ENCODE measurements at regions of chr10 and their contacts with region 1.

Region 1: DNA sequence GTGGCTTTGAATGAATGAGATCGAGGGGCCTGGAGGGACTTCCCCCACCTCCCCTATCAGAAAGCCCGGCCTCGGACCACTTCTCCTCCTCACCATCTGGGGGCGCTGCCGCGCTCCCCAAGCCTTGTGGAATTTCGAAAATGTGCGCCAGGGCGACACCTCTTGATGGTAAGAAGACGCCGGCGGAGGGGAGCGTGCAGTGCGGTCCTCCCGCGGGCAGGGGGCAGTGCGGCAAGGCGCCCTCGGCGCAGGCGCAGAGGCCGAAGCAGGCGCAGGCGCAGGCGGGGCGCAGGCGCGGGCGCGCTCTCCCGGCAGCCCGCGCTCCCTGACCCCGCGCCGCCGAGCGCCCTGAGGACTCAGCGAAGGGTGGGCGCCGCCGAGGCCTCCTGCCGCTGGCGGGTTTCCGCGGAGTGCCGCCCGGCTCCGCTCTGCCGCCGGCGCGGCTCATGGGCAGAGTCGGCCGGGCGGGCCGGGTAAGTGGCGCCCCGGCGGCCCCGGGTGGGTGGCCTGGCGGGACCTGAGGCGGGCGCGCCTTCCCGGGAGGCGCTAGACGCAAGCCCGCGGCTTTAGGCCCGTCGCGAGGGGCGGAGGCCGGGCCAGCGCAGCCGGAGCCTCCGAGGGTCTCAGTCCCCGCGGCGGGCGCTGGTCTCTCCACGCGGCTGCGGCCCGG is at the start of gene RBM17:
- DNase-seq: peak; percentile 96
- H3K4me3 ChIP-seq: peak within 1 kb of the TSS; percentile 86 to 97
- H3K27ac ChIP-seq: peak within 1 kb of the TSS; percentile 52 to 80
- H3K4me1 ChIP-seq: peaks cover 7% of the 10 kb centered on the region
- H3K27me3 ChIP-seq: no peaks in the 10 kb centered on the region
- CTCF ChIP-seq: peak; percentile 100
- POLR2A ChIP-seq: peak; percentile 46
- total RNA-seq, gene RBM17: 40.5 to 59.2 TPM

Region 2: GRCh38 chr10:5948999-5949759 is 139.7 kb before region 1 on chr10:
- intact Hi-C with region 1: loop called (anchors 5 kb)
- DNase-seq: no peak
- H3K4me3 ChIP-seq: no peak overlapping the region
- H3K27ac ChIP-seq: no peak overlapping the region
- H3K4me1 ChIP-seq: no peaks in the 10 kb centered on the region
- H3K27me3 ChIP-seq: no peaks in the 10 kb centered on the region
- CTCF ChIP-seq: peak in 3 of 4 experiments; percentile 11 to 46 (median 32)
- POLR2A ChIP-seq: no peak

Region 3: DNA sequence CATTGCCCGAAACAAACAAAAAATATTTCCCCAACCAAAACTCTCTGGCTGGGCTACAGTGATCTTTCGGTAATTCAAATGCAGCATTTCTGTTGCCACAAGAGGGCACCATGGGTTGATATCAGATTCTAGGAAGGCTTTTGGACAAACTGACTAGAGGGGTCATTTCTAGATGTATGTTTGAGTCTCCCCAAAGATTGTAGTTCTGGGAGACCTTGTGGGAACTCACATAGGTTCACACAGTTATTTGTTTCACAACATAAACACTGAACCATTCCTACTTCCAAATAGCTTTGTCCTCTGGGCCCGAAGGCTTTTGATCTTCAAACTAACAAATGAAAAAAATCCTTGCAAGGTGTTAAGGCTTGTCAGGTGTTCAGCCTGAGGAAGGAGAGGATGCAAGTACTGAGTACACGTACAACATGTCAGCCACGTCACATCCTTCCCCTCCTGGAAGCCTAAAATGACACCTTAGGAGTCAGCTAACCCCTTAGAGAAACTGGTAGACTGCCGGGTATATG is 74.6 kb before region 1 on chr10:
- intact Hi-C with region 1: loop called (anchors 10 kb)
- DNase-seq: peak; percentile 26
- H3K4me3 ChIP-seq: no peak overlapping the region
- H3K27ac ChIP-seq: no peak overlapping the region
- H3K4me1 ChIP-seq: no peaks in the 10 kb centered on the region
- H3K27me3 ChIP-seq: no peaks in the 10 kb centered on the region
- CTCF ChIP-seq: peak; percentile 38 to 67 (median 60)
- POLR2A ChIP-seq: no peak

Region 4: GRCh38 chr10:6141296-6142151 is 52.7 kb after region 1 on chr10:
- intact Hi-C with region 1: no loop called
- DNase-seq: peak; percentile 42
- H3K4me3 ChIP-seq: peak overlapping the region; percentile 7 to 16
- H3K27ac ChIP-seq: peak overlapping the region in 1 of 2 donors; percentile 38
- H3K4me1 ChIP-seq: no peaks in the 10 kb centered on the region
- H3K27me3 ChIP-seq: no peaks in the 10 kb centered on the region
- CTCF ChIP-seq: no peak
- POLR2A ChIP-seq: no peak

Region 5: GRCh38 chr10:6401562-6402348 is 312.9 kb after region 1 on chr10:
- intact Hi-C with region 1: loop called (anchors 5 kb)
- DNase-seq: peak; percentile 80
- H3K4me3 ChIP-seq: peak overlapping the region; percentile 5 to 21
- H3K27ac ChIP-seq: peak overlapping the region; percentile 25 to 40
- H3K4me1 ChIP-seq: no peaks in the 10 kb centered on the region
- H3K27me3 ChIP-seq: no peaks in the 10 kb centered on the region
- CTCF ChIP-seq: peak; percentile 21 to 92 (median 82)
- POLR2A ChIP-seq: no peak